ENCODE measurements at regions of chr11 and their contacts with region 1.

Region 1: DNA sequence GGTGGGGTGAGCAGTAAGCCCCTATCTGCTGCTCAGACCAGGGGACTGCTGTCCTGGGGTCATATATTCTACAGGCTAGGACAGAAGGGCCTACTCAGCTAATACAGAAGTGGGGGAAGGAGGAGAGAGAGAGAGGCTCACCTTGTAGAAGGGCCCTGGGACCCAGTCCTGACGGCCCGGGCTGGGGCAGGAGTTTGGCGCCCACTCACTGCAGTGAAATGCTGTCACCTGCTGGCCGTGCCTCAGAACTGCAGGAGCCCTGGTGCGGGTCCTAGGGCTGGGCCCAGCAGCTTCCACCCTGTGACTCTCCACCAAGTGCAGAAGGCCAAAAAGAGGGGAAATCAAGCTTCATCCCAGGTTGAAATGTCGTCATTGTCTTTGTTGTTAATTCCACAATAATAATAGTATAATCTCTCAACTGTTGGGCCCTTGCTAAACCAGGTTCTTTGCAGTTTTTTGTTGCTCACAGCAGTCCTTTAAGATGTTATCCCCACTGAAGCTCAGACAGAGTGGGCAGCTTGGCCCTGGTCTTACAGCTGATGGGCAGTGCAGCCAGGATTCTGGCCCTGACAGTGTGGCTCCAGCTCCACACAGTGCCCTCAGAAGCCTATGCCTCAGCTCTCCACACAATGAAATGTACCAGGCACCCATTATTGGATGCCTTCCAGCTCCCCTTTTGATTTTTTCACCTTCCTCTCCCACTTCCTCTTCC is 29.6 kb downstream of the TRIM29 start:
- DNase-seq: peak; percentile 59
- ATAC-seq: peak; percentile 86
- H3K4me3 Mint-ChIP-seq: no peak overlapping the region
- H3K27ac Mint-ChIP-seq: no peak overlapping the region
- H3K4me1 Mint-ChIP-seq: no peaks in the 10 kb centered on the region
- H3K27me3 Mint-ChIP-seq: peaks cover 21% of the 10 kb centered on the region
- CTCF ChIP-seq: no peak

Region 2: DNA sequence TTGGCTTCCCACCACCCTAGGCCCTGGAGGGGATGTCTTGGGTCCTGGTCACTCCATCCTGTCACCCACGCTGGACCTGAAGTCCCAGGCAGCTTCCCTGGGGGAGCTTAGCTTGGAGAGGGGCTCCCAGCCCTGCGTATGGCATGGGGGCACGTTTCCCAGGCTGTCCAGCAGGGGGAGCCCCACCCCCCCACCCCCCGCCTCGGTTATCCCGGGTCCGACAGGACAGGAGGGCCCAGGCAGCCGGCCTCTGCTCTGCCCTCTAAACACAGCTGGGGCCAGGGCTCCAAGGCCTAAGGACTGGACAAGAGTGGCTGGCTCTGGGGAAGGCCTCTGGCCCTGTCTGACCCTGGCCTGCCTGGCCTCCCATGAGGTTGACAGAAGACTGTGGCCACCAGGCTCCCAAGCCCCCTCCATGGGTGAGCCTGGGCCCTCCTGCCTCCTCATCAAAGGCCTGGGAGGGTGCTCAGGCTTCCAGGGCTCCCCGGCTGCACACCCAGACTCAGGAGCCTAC is 484.2 kb before region 1 on chr11:
- CTCF ChIA-PET with region 1: interaction called, 4 read pairs
- POLR2A ChIA-PET with region 1: no interaction called
- intact Hi-C with region 1: loop called (anchors 1 kb)
- DNase-seq: no peak
- ATAC-seq: no peak
- H3K4me3 Mint-ChIP-seq: no peak overlapping the region
- H3K27ac Mint-ChIP-seq: no peak overlapping the region
- H3K4me1 Mint-ChIP-seq: peaks cover 3% of the 10 kb centered on the region
- H3K27me3 Mint-ChIP-seq: peaks cover 18% of the 10 kb centered on the region
- CTCF ChIP-seq: no peak

Region 3: DNA sequence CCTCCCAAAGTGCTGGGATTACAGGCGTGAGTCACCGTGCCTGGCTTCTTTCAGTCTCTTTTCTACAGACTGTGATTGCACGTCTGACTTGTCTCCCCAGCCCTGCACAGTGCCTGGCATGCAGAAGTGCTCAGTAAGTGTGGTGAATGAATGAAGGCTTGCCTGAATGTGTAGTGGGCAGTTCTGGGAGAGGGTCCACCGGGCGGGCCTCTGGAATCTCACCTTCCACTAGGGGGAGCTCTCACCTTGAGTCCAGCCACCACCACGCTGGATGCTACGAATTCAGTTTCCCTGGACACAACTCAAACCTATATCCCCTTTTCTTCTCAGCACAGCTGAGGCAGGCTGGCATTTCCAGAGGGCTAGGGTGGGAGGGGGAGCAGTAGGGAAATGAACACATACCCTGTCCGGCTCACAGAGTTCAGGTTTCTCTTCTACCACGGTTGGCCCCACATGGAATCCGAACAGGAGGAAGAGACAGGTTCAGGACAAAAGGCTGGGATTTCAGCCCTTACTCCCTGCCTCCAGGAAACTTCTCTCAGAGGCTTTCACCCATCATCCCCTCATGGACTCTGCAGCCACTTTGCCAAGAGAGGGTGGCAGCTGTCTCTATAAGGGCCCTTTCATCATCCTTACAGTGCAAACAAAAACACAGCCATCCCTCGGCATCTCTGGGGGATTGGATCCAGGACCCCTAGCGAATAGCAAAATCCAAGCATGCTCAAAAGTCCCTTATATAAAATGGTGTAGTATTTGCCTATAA is 466.1 kb before region 1 on chr11:
- CTCF ChIA-PET with region 1: interaction called, 22 read pairs
- POLR2A ChIA-PET with region 1: no interaction called
- intact Hi-C with region 1: loop called (anchors 1 kb)
- DNase-seq: no peak
- ATAC-seq: no peak
- H3K4me3 Mint-ChIP-seq: no peak overlapping the region
- H3K27ac Mint-ChIP-seq: no peak overlapping the region
- H3K4me1 Mint-ChIP-seq: no peaks in the 10 kb centered on the region
- H3K27me3 Mint-ChIP-seq: peaks cover 6% of the 10 kb centered on the region
- CTCF ChIP-seq: no peak